Lower lobe of right lung (tissue), 2 donors: ENCODE measurements at regions of chr6 and their contacts with region 1.

Region 1: GRCh38 chr6:26312501-26313390 is 52.3 kb upstream of the BTN3A2 start:
- DNase-seq: peak; percentile 72
- ATAC-seq: peak; percentile 89 to 93
- H3K4me3 ChIP-seq: peak overlapping the region; percentile 59
- H3K27ac ChIP-seq: peak overlapping the region; percentile 27
- H3K4me1 ChIP-seq: peaks cover 11% of the 10 kb centered on the region
- H3K27me3 ChIP-seq: no peaks in the 10 kb centered on the region
- CTCF ChIP-seq: no peak

Region 2: DNA sequence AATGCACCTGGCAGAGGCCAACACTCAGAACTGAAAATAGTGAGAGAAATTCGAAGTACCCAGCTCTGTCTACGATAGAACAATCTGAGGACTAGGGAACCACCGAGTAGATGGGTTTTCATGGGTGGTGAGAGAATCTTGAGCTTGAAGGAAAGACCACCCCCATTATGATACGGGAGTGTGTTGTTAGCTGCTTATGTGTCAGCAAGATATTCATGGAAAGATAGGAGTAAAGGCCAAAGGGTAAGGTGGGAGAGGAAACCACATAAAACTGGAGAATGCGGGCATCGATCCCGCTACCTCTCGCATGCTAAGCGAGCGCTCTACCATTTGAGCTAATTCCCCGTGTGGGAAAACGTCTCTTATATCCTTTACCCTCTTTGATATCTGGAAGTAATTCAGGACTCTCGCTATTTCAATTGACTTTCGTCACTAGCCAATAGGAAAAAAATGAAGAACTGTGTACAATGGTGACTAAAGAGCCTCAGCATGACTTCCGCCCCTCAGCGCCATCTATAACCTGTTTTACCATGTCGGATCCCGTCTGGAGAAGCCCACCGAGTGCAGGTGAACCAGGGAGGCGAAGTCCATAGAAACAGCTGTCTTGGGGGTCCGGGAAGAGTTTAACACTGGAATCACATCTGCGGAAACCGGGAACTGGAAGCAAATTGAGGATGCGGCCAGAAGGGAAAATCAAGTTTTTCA is 259.0 kb after region 1 on chr6:
- intact Hi-C with region 1: loop called (anchors 10 kb)
- DNase-seq: no peak
- ATAC-seq: peak; percentile 78 to 85
- H3K4me3 ChIP-seq: peak overlapping the region; percentile 59
- H3K27ac ChIP-seq: peak overlapping the region; percentile 74
- H3K4me1 ChIP-seq: peaks cover 8% of the 10 kb centered on the region
- H3K27me3 ChIP-seq: no peaks in the 10 kb centered on the region
- CTCF ChIP-seq: no peak